Activated CD4-positive, alpha-beta memory T cell treated with anti-CD3 and anti-CD28 coated beads for 36 hours (primary cell): ENCODE measurements at regions of chr1 and their contacts with region 1.

Region 1: GRCh38 chr1:221794079-221794670 is 52.3 kb upstream of the DUSP10 start:
- DNase-seq: peak; percentile 56
- H3K4me3 Mint-ChIP-seq: no peak overlapping the region
- H3K27ac Mint-ChIP-seq: peak overlapping the region; percentile 84
- H3K4me1 Mint-ChIP-seq: peaks cover 41% of the 10 kb centered on the region
- H3K27me3 Mint-ChIP-seq: no peaks in the 10 kb centered on the region

Region 2: GRCh38 chr1:221753828-221754188 is 40.4 kb before region 1 on chr1:
- CTCF ChIA-PET with region 1: no interaction called
- POLR2A ChIA-PET with region 1: interaction called, 3 read pairs
- intact Hi-C with region 1: loop called (anchors 1 kb)
- DNase-seq: no peak
- H3K4me3 Mint-ChIP-seq: no peak overlapping the region
- H3K27ac Mint-ChIP-seq: peak overlapping the region; percentile 19
- H3K4me1 Mint-ChIP-seq: peaks cover 33% of the 10 kb centered on the region
- H3K27me3 Mint-ChIP-seq: no peaks in the 10 kb centered on the region

Region 3: GRCh38 chr1:221783936-221784335 is 10.2 kb before region 1 on chr1:
- CTCF ChIA-PET with region 1: interaction called, 6 read pairs
- POLR2A ChIA-PET with region 1: interaction called, 12 read pairs
- intact Hi-C with region 1: loop called (anchors 1 kb)
- DNase-seq: peak; percentile 27
- H3K4me3 Mint-ChIP-seq: no peak overlapping the region
- H3K27ac Mint-ChIP-seq: no peak overlapping the region
- H3K4me1 Mint-ChIP-seq: peaks cover 47% of the 10 kb centered on the region
- H3K27me3 Mint-ChIP-seq: peaks cover 2% of the 10 kb centered on the region

Region 4: DNA sequence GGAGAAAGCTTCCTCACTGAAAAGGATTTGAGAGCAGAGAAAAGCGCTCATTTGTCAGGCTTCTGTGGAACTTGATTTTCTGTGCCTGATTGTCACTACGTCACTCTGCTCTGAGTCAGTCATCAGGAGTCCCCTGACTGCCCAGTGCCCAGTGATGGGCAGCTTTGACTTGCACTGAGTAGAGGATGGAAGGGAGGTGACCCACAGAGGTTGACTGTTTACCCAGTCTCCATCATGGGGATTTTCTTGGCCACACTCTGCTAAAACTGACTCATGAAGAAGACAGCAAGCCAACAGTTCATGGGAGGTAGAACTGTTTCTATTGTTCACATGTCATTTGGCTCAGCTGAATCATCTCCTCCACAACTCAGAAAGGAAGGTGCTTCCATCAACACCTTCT is 29.9 kb after region 1 on chr1:
- CTCF ChIA-PET with region 1: interaction called, 4 read pairs
- POLR2A ChIA-PET with region 1: interaction called, 9 read pairs
- intact Hi-C with region 1: loop called (anchors 1 kb)
- DNase-seq: peak; percentile 71
- H3K4me3 Mint-ChIP-seq: no peak overlapping the region
- H3K27ac Mint-ChIP-seq: peak overlapping the region; percentile 50
- H3K4me1 Mint-ChIP-seq: peaks cover 55% of the 10 kb centered on the region
- H3K27me3 Mint-ChIP-seq: no peaks in the 10 kb centered on the region

Region 5: GRCh38 chr1:221839796-221840395 is 45.7 kb after region 1 on chr1:
- CTCF ChIA-PET with region 1: interaction called, 7 read pairs
- POLR2A ChIA-PET with region 1: no interaction called
- intact Hi-C with region 1: loop called (anchors 2 kb)
- DNase-seq: peak; percentile 88
- H3K4me3 Mint-ChIP-seq: no peak overlapping the region
- H3K27ac Mint-ChIP-seq: peak overlapping the region; percentile 74
- H3K4me1 Mint-ChIP-seq: peaks cover 38% of the 10 kb centered on the region
- H3K27me3 Mint-ChIP-seq: peaks cover 6% of the 10 kb centered on the region

Region 6: GRCh38 chr1:221850471-221851187 is 56.5 kb after region 1 on chr1:
- CTCF ChIA-PET with region 1: no interaction called
- POLR2A ChIA-PET with region 1: no interaction called
- intact Hi-C with region 1: no loop called
- DNase-seq: no peak
- H3K4me3 Mint-ChIP-seq: no peak overlapping the region
- H3K27ac Mint-ChIP-seq: no peak overlapping the region
- H3K4me1 Mint-ChIP-seq: peaks cover 5% of the 10 kb centered on the region
- H3K27me3 Mint-ChIP-seq: no peaks in the 10 kb centered on the region